A549 (cell line): ENCODE measurements at regions of chr5 and their contacts with region 1.

Region 1: DNA sequence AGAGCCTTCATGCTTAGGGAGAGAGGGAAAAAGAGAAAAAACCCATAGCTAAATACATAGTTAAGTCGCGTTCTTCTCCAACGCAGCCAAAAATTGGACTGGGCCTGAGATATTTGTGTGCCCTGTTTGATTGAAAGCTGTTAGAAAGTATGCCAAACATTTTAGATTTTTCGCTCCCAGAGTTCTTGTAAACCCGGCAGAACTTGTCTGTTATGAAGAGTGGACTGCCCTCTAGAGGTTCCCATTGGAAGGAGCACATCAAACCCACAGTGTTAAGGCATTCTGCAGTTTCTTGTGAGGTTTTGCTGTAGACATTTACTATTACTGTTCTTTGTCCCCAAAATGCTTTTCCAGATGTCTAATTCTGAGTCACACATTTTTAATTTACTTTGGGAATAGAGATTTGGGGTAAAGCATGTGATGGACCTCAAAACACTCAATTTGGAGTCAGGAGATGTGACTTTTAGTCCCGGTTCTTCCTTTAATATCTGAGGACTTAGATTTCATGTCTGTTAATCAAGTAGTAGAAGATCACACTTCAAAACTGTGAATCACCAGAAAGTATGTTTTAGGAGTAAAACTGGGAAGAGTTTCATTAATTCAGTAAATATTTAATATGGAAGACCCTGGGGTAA is 96.6 kb downstream of the PCSK1 start:
- DNase-seq: peak; percentile 48 to 88
- ATAC-seq: peak; percentile 88 to 95
- H3K4me3 ChIP-seq: no peak overlapping the region
- H3K27ac ChIP-seq: peak overlapping the region; percentile 70 to 75
- H3K4me1 ChIP-seq: peaks cover 46% of the 10 kb centered on the region
- CTCF ChIP-seq: peak; percentile 90
- EP300 ChIP-seq: no peak
- POLR2A ChIP-seq: no peak
- RAD21 ChIP-seq: peak; percentile 97 to 98

Region 2: GRCh38 chr5:95853490-95853889 is 483.0 kb before region 1 on chr5:
- CTCF ChIA-PET with region 1: interaction called, 127 read pairs
- POLR2A ChIA-PET with region 1: no interaction called
- DNase-seq: no peak
- ATAC-seq: no peak
- H3K4me3 ChIP-seq: no peak overlapping the region
- H3K27ac ChIP-seq: no peak overlapping the region
- H3K4me1 ChIP-seq: peaks cover 10% of the 10 kb centered on the region
- CTCF ChIP-seq: no peak
- EP300 ChIP-seq: no peak
- POLR2A ChIP-seq: no peak
- RAD21 ChIP-seq: no peak

Region 3: GRCh38 chr5:95892780-95893354 is 443.6 kb before region 1 on chr5:
- CTCF ChIA-PET with region 1: interaction called, 15 read pairs
- POLR2A ChIA-PET with region 1: no interaction called
- DNase-seq: peak; percentile 41 to 49
- ATAC-seq: peak; percentile 93 to 95
- H3K4me3 ChIP-seq: no peak overlapping the region
- H3K27ac ChIP-seq: no peak overlapping the region
- H3K4me1 ChIP-seq: peaks cover 7% of the 10 kb centered on the region
- CTCF ChIP-seq: peak; percentile 65
- EP300 ChIP-seq: no peak
- POLR2A ChIP-seq: no peak
- RAD21 ChIP-seq: peak; percentile 75 to 83

Region 4: DNA sequence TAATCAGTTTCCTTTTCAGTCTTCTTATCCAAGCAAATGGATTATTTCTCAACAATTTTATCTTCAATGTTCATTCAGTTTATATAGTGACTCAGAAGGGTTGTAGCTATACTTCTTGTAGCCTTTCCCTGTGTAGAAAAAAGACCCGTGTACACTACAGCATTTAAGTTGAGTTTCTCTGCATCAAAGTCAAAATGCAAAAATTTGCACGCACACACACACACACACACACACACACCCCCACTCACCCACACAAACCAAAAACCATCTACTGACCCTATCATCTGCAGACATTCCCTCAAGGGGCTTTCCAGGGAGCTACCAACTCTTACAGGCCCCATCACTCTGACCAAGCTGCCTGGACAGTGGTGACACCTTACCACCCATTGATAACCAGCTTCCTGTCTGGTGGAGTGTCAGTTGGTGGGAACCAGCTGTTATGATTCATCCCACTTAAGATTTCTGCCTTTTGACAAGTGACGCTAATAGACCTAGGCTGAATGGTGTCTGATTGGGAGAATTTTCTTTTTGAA is 362.6 kb before region 1 on chr5:
- CTCF ChIA-PET with region 1: interaction called, 10 read pairs
- POLR2A ChIA-PET with region 1: no interaction called
- DNase-seq: no peak
- ATAC-seq: no peak
- H3K4me3 ChIP-seq: no peak overlapping the region
- H3K27ac ChIP-seq: no peak overlapping the region
- H3K4me1 ChIP-seq: 0 out of 3 replicates have a peak, but pooled peaks cover 3% of the 10 kb centered on the region
- CTCF ChIP-seq: no peak
- EP300 ChIP-seq: no peak
- POLR2A ChIP-seq: no peak
- RAD21 ChIP-seq: no peak

Region 5: DNA sequence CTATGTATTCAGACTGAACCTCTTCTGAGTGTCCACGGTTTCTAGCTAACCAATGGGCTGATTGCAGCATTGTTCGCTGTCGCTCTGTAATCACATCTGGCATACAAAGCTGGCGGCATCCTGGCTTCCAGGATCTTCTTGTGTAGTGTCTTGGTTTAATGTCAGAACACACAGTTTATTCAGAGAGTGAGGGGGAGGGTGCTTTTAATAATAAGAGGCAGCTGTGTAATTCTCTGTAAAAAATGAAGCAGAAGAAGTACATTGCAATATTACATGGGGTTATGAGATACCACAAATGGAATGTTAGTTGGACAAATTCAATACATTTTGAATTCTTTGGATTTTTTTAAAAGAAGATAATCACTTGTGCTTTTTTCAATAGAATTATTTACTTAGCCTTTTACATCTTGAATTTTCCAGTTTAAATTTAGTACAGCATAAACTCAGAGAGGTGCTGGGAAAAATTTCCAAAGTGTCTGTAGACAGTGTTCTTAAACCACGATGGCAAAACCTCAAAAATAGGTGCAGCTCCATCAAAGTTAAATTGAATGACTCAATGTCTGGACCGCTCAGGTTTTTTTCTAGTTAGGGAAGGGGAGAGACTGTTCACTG is 109.4 kb before region 1 on chr5:
- CTCF ChIA-PET with region 1: interaction called, 19 read pairs
- POLR2A ChIA-PET with region 1: no interaction called
- DNase-seq: peak in 1 of 2 experiments; percentile 19
- ATAC-seq: peak; percentile 61 to 73; a peak in 4 of 6 replicates
- H3K4me3 ChIP-seq: no peak overlapping the region
- H3K27ac ChIP-seq: peak overlapping the region; percentile 71 to 80
- H3K4me1 ChIP-seq: peaks cover 24% of the 10 kb centered on the region
- CTCF ChIP-seq: no peak
- EP300 ChIP-seq: no peak
- POLR2A ChIP-seq: no peak
- RAD21 ChIP-seq: no peak

Region 6: GRCh38 chr5:96324708-96325107 is 11.8 kb before region 1 on chr5:
- CTCF ChIA-PET with region 1: interaction called, 62 read pairs
- POLR2A ChIA-PET with region 1: no interaction called
- DNase-seq: peak; percentile 10 to 63
- ATAC-seq: peak in 1 of 2 experiments; percentile 72; a peak in 3 of 6 replicates
- H3K4me3 ChIP-seq: no peak overlapping the region
- H3K27ac ChIP-seq: peak overlapping the region in 1 of 2 experiments; percentile 36; a peak in 1 of 6 replicates
- H3K4me1 ChIP-seq: peaks cover 13% of the 10 kb centered on the region
- CTCF ChIP-seq: no peak
- EP300 ChIP-seq: no peak
- POLR2A ChIP-seq: no peak
- RAD21 ChIP-seq: no peak